ENCODE measurements at regions of chr16 and their contacts with region 1.

Region 1: GRCh38 chr16:55179852-55180585 is 144.0 kb upstream of the IRX6 start:
- DNase-seq: no peak
- H3K4me3 ChIP-seq: no peak overlapping the region
- H3K27ac ChIP-seq: no peak overlapping the region
- H3K4me1 ChIP-seq: no peaks in the 10 kb centered on the region
- H3K27me3 ChIP-seq: no peaks in the 10 kb centered on the region
- CTCF ChIP-seq: no peak

Region 2: GRCh38 chr16:55248494-55248893 is 68.5 kb after region 1 on chr16:
- dilution Hi-C with region 1: loop called (anchors 10 kb)
- DNase-seq: no peak
- H3K4me3 ChIP-seq: no peak overlapping the region
- H3K27ac ChIP-seq: no peak overlapping the region
- H3K4me1 ChIP-seq: no peaks in the 10 kb centered on the region
- H3K27me3 ChIP-seq: no peaks in the 10 kb centered on the region
- CTCF ChIP-seq: no peak